HCT116 (cell line): ENCODE measurements at regions of chr16 and their contacts with region 1.

Region 1: DNA sequence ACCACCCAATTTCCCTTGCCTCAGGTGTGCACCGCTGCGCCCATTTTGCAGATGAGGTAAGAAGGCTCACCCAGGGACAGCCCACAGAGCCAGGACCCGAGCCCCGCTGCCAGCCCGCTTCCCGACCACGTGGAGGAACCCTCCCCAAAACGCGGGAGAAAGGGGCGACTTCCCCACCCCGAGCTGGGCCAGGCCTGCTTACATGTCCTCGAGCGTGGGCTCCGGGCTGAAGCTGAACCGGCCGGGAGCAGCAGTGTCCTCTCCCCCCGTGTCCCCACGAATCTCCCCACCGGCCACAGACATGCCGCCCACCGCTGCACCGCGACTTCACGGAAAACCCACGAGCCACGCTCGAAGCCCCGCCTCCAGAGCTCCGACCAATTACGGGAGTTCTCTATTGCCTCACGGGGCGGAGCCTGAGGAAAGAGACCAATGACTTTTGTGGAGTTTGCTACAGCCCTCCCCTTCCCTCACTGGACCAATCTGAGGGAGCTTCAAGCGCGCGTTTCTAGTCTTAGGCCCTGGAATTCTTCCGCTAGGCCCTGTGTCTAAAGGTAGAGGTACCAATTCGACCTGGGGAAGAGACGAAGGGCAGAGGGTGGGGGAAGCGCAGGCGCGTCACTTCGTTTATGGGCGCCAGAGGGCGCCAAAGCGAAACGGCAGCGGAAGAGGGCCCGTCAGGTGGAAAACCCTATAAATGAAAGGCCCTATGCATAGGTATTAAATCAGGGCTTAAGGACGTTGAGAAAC is at the start of gene DCTPP1:
- DNase-seq: peak; percentile 99
- ATAC-seq: peak; percentile 94
- H3K4me3 ChIP-seq: peak within 1 kb of the TSS; percentile 89 to 94
- H3K27ac ChIP-seq: peak within 1 kb of the TSS; percentile 66
- H3K4me1 ChIP-seq: peaks cover 8 to 29% of the 10 kb centered on the region in 2 experiments
- H3K27me3 ChIP-seq: no peaks in the 10 kb centered on the region
- CTCF ChIP-seq: peak; percentile 79 to 94 (median 81)
- POLR2A ChIP-seq: peak; percentile 61
- RAD21 ChIP-seq: peak; percentile 89
- total RNA-seq, gene DCTPP1: 125 TPM

Region 2: GRCh38 chr16:30407102-30407803 is 22.6 kb before region 1 on chr16 and contains the start of gene ZNF771:
- CTCF ChIA-PET with region 1: interaction called, 15 read pairs
- POLR2A ChIA-PET with region 1: no interaction called
- RAD21 ChIA-PET with region 1: interaction called in 1 of 2 experiments, 4 read pairs
- intact Hi-C with region 1: no loop called
- DNase-seq: peak; percentile 73
- ATAC-seq: peak; percentile 87
- H3K4me3 ChIP-seq: peak within 1 kb of the TSS; percentile 80 to 93
- H3K27ac ChIP-seq: peak within 1 kb of the TSS; percentile 87
- H3K4me1 ChIP-seq: peaks cover 18 to 26% of the 10 kb centered on the region in 2 experiments
- H3K27me3 ChIP-seq: no peaks in the 10 kb centered on the region
- CTCF ChIP-seq: no peak
- POLR2A ChIP-seq: peak; percentile 35
- RAD21 ChIP-seq: no peak
- total RNA-seq, gene ZNF771: 11.0 TPM

Region 3: DNA sequence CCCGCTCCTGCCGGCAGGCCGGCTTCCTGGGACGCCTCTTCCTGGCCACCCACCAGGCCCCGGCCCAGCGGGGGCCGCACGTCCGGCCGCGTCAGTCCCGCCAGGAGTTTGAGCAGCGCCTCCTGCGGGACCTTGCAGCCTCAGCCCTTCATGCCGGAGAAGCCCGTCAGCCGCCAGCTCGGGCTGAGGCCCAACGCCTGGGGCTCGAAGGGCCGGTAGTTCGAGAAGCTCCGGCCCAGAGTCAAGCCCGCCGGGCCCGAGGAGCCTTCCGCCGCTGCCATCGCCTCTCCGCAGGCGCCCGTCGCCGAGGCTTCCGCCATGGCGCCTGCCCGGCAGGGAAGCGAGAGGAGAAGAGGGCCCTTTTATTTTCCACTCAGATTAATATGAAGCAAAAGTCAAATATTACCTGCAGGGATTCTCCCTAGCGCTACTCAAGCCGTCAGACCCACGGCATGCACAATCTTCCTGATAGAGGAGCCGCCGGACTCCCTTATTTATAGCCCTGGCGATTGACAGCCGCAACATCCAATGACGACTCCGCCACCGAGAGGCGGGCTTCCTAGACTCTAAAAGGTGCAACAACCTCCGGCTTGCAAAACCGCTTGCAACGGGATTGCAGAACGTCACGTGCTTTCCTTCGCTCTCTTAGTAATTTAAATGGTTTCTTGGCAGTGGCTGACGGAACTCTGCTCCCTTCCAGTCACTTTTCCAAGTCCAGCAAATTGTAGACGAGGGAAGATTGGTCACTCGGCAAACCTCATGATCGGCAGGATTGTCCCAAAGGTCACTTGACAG is 15.8 kb after region 1 on chr16 and contains the start of gene SEPHS2:
- CTCF ChIA-PET with region 1: interaction called, 10 read pairs
- POLR2A ChIA-PET with region 1: interaction called, 10 read pairs
- RAD21 ChIA-PET with region 1: no interaction called
- intact Hi-C with region 1: no loop called
- DNase-seq: peak; percentile 96
- ATAC-seq: peak; percentile 92
- H3K4me3 ChIP-seq: peak within 1 kb of the TSS; percentile 80 to 90
- H3K27ac ChIP-seq: peak within 1 kb of the TSS; percentile 86
- H3K4me1 ChIP-seq: peaks cover 5 to 20% of the 10 kb centered on the region in 2 experiments
- H3K27me3 ChIP-seq: no peaks in the 10 kb centered on the region
- CTCF ChIP-seq: peak in 2 of 3 experiments; percentile 50 to 52; a peak in 5 of 6 replicates
- POLR2A ChIP-seq: peak; percentile 98
- RAD21 ChIP-seq: 0 out of 2 replicates have a peak, but pooled peaks have one; percentile 23
- total RNA-seq, gene SEPHS2: 51.3 TPM

Region 4: DNA sequence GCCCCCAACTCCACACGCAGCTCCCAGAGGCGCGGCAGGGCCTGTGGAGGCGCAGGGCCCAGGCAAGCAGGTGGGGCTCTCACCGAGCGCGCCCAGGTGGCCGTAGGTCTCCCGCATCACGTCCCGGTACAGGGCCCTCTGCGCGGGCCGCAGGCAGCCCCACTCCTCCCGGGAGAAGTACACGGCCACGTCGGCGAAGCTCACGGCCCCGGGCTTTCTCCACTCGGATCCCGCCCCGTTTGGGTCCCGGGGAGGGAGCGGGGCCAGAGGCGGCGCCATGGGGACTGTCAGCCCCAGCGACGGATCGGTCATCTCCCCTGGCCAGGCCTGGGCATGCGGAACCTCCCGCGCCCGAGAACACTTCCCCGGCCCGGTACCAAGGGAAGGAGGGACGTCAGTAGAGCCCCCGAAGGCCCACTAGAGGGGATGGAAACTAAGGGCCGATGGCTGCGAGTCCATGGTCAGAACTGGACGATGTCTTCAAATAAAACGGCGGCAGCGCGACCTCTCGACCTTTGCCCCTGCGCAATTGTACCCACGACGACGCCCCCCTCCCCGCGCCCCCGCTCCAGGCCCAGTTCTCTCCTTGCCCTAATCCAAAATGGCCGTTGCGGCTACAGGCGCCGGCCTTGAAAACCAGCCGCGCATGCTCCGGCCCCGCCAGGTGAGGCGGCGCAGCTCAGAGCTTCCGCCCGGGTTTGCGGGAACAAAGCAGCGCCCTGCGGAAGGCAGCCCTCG is 104.7 kb after region 1 on chr16 and contains the start of gene ZNF747:
- CTCF ChIA-PET with region 1: interaction called, 11 read pairs
- POLR2A ChIA-PET with region 1: interaction called, 6 read pairs
- RAD21 ChIA-PET with region 1: interaction called in 1 of 2 experiments, 18 read pairs
- intact Hi-C with region 1: loop called (anchors 5 kb)
- DNase-seq: peak; percentile 70
- ATAC-seq: peak; percentile 87
- H3K4me3 ChIP-seq: peak within 1 kb of the TSS; percentile 60 to 79
- H3K27ac ChIP-seq: peak within 1 kb of the TSS; percentile 82
- H3K4me1 ChIP-seq: peaks cover 6 to 39% of the 10 kb centered on the region in 2 experiments; a peak in 3 of 4 replicates
- H3K27me3 ChIP-seq: no peaks in the 10 kb centered on the region
- CTCF ChIP-seq: no peak
- POLR2A ChIP-seq: no peak
- RAD21 ChIP-seq: no peak
- total RNA-seq, gene ZNF747: 2.1 TPM

Region 5: GRCh38 chr16:30609926-30610839 is 180.3 kb after region 1 on chr16 and contains the start of gene ZNF689:
- CTCF ChIA-PET with region 1: interaction called, 21 read pairs
- POLR2A ChIA-PET with region 1: interaction called, 7 read pairs
- RAD21 ChIA-PET with region 1: interaction called in 1 of 2 experiments, 3 read pairs
- intact Hi-C with region 1: no loop called
- DNase-seq: peak; percentile 97
- ATAC-seq: peak; percentile 81
- H3K4me3 ChIP-seq: peak within 1 kb of the TSS; percentile 85 to 95
- H3K27ac ChIP-seq: peak within 1 kb of the TSS; percentile 97
- H3K4me1 ChIP-seq: peaks cover 12 to 19% of the 10 kb centered on the region in 2 experiments; a peak in 2 of 4 replicates
- H3K27me3 ChIP-seq: no peaks in the 10 kb centered on the region
- CTCF ChIP-seq: no peak
- POLR2A ChIP-seq: no peak
- RAD21 ChIP-seq: no peak
- total RNA-seq, gene ZNF689: 10.3 TPM

Region 6: GRCh38 chr16:30628627-30629540 is 199.0 kb after region 1 on chr16:
- CTCF ChIA-PET with region 1: interaction called, 24 read pairs
- POLR2A ChIA-PET with region 1: interaction called, 4 read pairs
- RAD21 ChIA-PET with region 1: interaction called in 1 of 2 experiments, 5 read pairs
- intact Hi-C with region 1: loop called (anchors 5 kb)
- DNase-seq: peak; percentile 70
- ATAC-seq: peak; percentile 94
- H3K4me3 ChIP-seq: no peak overlapping the region
- H3K27ac ChIP-seq: 0 out of 2 replicates have a peak overlapping the region, but pooled peaks have one; percentile 18
- H3K4me1 ChIP-seq: peaks cover 4 to 14% of the 10 kb centered on the region in 2 experiments; a peak in 3 of 4 replicates
- H3K27me3 ChIP-seq: no peaks in the 10 kb centered on the region
- CTCF ChIP-seq: peak; percentile 86 to 94 (median 93)
- POLR2A ChIP-seq: no peak
- RAD21 ChIP-seq: peak; percentile 89